PC-9 (cell line): ENCODE measurements at regions of chr17 and their contacts with region 1.

Region 1: GRCh38 chr17:67467544-67468455 is 90.7 kb downstream of the PITPNC1 start:
- DNase-seq: no peak
- H3K4me3 ChIP-seq: no peak overlapping the region
- H3K27ac ChIP-seq: no peak overlapping the region
- H3K4me1 ChIP-seq: no peaks in the 10 kb centered on the region
- H3K27me3 ChIP-seq: no peaks in the 10 kb centered on the region
- CTCF ChIP-seq: no peak

Region 2: GRCh38 chr17:67491009-67491680 is 23.3 kb after region 1 on chr17:
- CTCF ChIA-PET with region 1: interaction called, 12 read pairs
- POLR2A ChIA-PET with region 1: no interaction called
- intact Hi-C with region 1: no loop called
- DNase-seq: peak; percentile 77 to 83
- H3K4me3 ChIP-seq: peak overlapping the region; percentile 50; the same call in 1 of the 2 replicates
- H3K27ac ChIP-seq: no peak overlapping the region
- H3K4me1 ChIP-seq: peaks cover 8% of the 10 kb centered on the region
- H3K27me3 ChIP-seq: no peaks in the 10 kb centered on the region
- CTCF ChIP-seq: no peak

Region 3: DNA sequence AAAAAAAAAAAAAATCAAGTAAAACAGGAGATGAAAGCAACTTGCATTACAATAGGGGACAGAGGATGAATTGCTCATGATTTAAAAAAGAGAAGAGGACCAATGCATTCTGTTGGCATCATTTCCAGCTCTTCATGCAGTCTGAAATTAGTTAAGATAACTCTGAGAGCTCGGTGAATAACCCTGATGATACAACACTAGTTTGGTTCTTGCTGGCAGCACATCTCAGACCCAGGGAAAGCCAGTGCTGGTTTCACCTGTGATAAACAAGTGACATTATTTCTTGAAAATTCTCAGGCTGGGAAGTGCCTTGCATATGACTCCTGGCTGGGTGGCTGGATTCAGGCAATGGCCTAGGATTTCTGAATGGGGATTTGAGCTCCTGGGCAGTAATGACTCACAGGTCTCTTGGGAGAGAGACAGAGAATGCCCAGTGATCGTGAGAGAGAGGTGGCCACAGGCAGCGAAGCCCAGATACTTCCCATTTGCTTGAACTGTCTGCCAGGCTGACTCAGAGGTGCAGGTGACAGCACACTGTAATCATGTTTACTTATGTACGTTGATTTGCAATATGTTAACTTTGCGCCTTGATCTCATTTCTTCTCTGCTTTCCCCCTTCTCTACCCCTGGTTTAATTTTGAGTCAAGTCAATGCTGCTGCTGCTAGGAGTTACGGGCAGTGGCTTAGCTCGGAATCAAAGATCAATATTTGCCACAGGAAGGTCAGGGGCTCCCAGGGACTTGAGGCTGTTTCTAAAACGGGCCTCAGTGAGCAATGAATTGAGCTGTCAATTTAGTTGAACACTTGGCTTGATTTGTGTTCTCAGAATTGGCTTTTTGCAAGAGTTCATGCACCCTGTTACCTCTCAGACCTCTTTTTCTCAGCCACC is 850.5 kb after region 1 on chr17:
- CTCF ChIA-PET with region 1: no interaction called
- POLR2A ChIA-PET with region 1: no interaction called
- intact Hi-C with region 1: no loop called
- DNase-seq: peak; percentile 71 to 97
- H3K4me3 ChIP-seq: peak overlapping the region; percentile 25; the same call in 1 of the 2 replicates
- H3K27ac ChIP-seq: peak overlapping the region; percentile 82
- H3K4me1 ChIP-seq: peaks cover 45% of the 10 kb centered on the region
- H3K27me3 ChIP-seq: no peaks in the 10 kb centered on the region
- CTCF ChIP-seq: no peak